PC-9 (cell line): ENCODE measurements at regions of chr11 and their contacts with region 1.

Region 1: GRCh38 chr11:57644748-57645688 is 4.7 kb downstream of the YPEL4 start:
- DNase-seq: peak; percentile 60 to 83
- H3K4me3 ChIP-seq: no peak overlapping the region
- H3K27ac ChIP-seq: no peak overlapping the region
- H3K4me1 ChIP-seq: peaks cover 3% of the 10 kb centered on the region; the same call in 1 of the 2 replicates
- H3K27me3 ChIP-seq: peaks cover 46% of the 10 kb centered on the region
- CTCF ChIP-seq: peak; percentile 98

Region 2: GRCh38 chr11:57530596-57531507 is 114.2 kb before region 1 on chr11 and contains the start of gene TIMM10:
- CTCF ChIA-PET with region 1: interaction called, 3 read pairs
- POLR2A ChIA-PET with region 1: no interaction called
- intact Hi-C with region 1: loop called (anchors 1 kb)
- DNase-seq: peak; percentile 98 to 99
- H3K4me3 ChIP-seq: peak within 1 kb of the TSS; percentile 83
- H3K27ac ChIP-seq: peak within 1 kb of the TSS; percentile 48
- H3K4me1 ChIP-seq: peaks cover 27% of the 10 kb centered on the region
- H3K27me3 ChIP-seq: peaks cover 4% of the 10 kb centered on the region; the same call in 1 of the 2 replicates
- CTCF ChIP-seq: peak; percentile 23; the same call in 1 of the 2 replicates
- total RNA-seq, gene TIMM10: 90.2 and 94.7 TPM in 2 replicates

Region 3: DNA sequence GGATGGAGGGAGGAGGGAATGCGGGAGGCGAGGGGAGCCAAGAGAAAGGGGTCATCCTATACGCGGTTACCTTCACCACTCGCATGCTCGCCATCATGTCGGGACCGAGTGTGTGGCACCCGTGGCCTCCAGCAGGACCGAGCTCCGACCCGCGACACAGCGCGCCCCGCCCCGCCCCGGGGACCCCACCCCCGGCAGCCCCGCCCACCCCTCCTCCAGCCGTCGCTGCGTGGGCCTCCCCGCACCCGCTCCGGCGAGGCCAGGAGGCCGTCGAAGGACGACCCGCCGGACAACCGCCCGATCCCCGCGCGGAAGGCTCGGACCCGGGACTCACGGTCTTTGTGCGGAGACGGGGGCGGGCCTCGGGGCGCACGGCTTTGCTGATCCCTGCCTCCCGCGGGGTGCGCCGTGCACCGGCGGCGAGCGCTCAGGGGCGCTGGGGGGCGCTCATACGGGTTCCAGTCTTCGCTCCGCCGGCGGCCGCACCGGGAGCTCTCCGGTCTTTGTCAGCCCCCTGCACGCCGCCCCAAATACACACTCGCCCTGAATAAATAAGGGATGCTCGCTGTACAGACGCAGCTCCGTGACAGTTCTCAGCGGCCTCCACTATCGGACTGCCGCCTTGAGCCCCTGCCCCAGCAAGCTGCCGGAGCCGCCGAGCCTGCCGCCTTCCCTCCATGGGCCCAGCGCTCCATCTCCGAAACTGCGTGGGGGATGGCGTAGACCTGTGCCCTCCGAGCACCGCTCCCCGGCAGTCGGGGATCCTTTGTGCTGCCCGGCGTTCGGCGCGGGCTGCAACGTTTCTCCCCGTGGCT is 77.3 kb before region 1 on chr11 and contains the start of gene UBE2L6:
- CTCF ChIA-PET with region 1: interaction called, 8 read pairs
- POLR2A ChIA-PET with region 1: no interaction called
- intact Hi-C with region 1: loop called (anchors 1 kb)
- DNase-seq: peak in 1 of 2 experiments; percentile 62
- H3K4me3 ChIP-seq: peak within 1 kb of the TSS; percentile 89
- H3K27ac ChIP-seq: no peak within 1 kb of the TSS
- H3K4me1 ChIP-seq: peaks cover 24% of the 10 kb centered on the region
- H3K27me3 ChIP-seq: no peaks in the 10 kb centered on the region
- CTCF ChIP-seq: no peak
- total RNA-seq, gene UBE2L6: 121 and 122 TPM in 2 replicates

Region 4: GRCh38 chr11:57584341-57584740 is 60.7 kb before region 1 on chr11:
- CTCF ChIA-PET with region 1: no interaction called
- POLR2A ChIA-PET with region 1: interaction called, 11 read pairs
- intact Hi-C with region 1: no loop called
- DNase-seq: no peak
- H3K4me3 ChIP-seq: no peak overlapping the region
- H3K27ac ChIP-seq: no peak overlapping the region
- H3K4me1 ChIP-seq: no peaks in the 10 kb centered on the region
- H3K27me3 ChIP-seq: no peaks in the 10 kb centered on the region
- CTCF ChIP-seq: no peak

Region 5: GRCh38 chr11:57657194-57658022 is 12.4 kb after region 1 on chr11 and contains the start of gene CLP1:
- CTCF ChIA-PET with region 1: interaction called, 10 read pairs
- POLR2A ChIA-PET with region 1: interaction called, 12 read pairs
- intact Hi-C with region 1: no loop called
- DNase-seq: peak; percentile 98 to 100
- H3K4me3 ChIP-seq: peak within 1 kb of the TSS; percentile 96
- H3K27ac ChIP-seq: peak within 1 kb of the TSS; percentile 25
- H3K4me1 ChIP-seq: peaks cover 7% of the 10 kb centered on the region
- H3K27me3 ChIP-seq: no peaks in the 10 kb centered on the region
- CTCF ChIP-seq: peak; percentile 13; the same call in 1 of the 2 replicates
- total RNA-seq, gene CLP1: 23.4 and 24.2 TPM in 2 replicates